AG04450 (cell line): ENCODE measurements at regions of chr1 and their contacts with region 1.

Region 1: DNA sequence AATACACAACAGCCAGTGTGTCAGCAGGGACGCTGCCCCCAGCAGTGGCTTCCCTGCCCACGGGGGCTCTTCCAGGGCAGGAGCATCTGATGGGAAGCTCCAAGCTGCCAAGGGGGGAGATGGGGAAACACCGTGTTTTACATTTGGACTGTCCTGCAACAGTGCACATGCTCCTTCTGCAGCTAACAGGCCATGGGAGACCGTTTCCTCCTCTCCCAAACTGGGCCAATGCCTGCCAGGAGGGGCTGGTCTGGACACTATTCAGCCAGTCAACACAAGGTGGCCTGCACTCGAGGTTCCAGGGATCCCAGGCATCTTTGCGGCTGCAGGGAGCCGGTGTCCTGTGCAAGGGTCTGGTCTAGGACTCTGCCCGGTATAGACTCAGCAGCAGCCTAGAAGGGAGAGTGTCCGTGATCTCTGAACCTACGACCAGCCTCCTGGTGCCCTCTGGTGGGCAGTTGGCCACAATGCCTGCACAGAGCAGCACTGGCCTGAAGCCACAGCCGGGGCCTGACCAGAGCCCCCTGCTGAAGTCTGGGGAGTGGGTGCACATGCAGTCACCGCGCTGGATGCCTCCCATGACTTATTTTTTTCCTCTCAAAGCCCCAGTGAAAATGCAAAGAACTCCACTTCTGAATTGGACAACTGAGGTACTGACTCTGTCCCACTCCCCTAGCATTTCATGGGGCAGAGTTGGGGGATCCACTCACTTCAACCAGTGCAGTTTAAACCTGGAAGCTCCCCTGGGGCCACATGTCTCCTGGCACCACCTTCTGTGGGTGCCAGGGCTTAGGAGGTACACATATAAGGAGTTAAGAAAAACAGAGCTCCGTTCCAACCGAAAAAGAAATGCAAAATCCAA is 33.3 kb downstream of the RCC2 start:
- DNase-seq: peak; percentile 8
- H3K4me3 ChIP-seq: no peak overlapping the region
- H3K27ac ChIP-seq: no peak overlapping the region
- H3K27me3 ChIP-seq: no peaks in the 10 kb centered on the region
- CTCF ChIP-seq: peak; percentile 78

Region 2: DNA sequence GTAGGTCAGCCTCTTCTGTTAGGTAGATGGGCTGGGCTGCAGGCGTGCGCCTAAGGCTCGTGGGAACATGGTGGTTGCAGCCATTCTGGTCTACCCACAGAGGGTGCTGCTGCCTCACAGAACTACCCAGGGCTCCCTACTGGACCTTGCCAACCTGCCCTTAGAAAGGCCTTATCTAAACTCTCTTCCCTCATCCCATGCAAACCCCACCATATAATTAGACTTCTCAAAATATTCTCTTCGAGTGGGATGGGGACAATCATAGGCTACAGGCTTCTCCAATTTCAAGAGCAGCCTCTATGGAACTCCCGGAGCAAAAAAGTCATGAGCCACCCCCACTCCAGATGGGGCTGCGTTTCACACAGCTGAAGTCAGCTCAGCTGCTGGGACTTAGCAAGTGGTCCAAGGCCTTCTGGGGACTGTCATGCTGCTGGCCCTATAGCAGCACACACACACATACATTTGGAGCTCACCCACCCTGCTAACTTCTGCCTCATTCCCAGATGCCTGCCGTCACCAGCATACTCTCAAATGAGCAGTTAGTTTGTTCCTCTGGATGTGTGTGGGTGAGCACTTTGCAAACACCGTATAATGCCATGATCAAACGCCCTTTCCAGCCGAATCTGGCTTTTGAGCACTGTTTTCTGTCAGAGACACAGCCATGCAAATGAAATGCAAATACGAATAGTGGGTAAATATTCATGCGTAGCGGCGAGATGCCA is 346.2 kb before region 1 on chr1:
- CTCF ChIA-PET with region 1: interaction called, 14 read pairs
- POLR2A ChIA-PET with region 1: no interaction called
- DNase-seq: peak; percentile 26
- H3K4me3 ChIP-seq: no peak overlapping the region
- H3K27ac ChIP-seq: no peak overlapping the region
- H3K27me3 ChIP-seq: peaks cover 7% of the 10 kb centered on the region
- CTCF ChIP-seq: peak; percentile 84